AG04450 (cell line): ENCODE measurements at regions of chr2 and their contacts with region 1.

Region 1: GRCh38 chr2:163182764-163183354 is 344.3 kb upstream of the KCNH7 start:
- DNase-seq: no peak
- H3K4me3 ChIP-seq: no peak overlapping the region
- H3K27ac ChIP-seq: no peak overlapping the region
- H3K27me3 ChIP-seq: no peaks in the 10 kb centered on the region
- CTCF ChIP-seq: peak; percentile 63

Region 2: DNA sequence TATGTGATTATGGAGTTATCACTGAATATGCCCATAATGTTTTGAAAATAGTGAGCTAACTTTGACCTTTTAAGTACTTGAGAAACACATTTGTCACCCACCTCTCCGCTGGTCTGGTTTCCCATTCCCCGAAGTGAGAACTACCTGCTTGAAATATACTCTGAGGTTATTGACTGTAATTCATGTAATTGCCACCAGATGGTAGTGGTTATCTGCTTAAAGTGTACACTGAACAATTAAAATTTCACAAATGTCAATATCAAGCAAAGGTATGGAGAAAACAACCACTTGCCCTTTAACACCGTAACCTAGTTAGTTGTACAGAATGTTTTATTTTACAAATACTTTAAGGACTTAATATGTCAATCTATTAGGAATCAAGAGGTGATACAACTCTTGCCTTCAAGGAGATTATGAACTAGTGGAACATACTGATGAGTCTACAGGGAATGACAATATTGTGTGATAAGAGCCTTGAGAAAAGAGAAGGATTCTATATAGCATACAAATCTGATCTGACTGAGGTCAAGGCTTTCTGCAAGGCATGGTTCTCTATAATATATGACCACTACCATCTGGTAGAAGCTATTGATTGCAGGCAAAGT is 27.5 kb before region 1 on chr2:
- CTCF ChIA-PET with region 1: interaction called, 64 read pairs
- POLR2A ChIA-PET with region 1: no interaction called
- DNase-seq: no peak
- H3K4me3 ChIP-seq: no peak overlapping the region
- H3K27ac ChIP-seq: no peak overlapping the region
- H3K27me3 ChIP-seq: no peaks in the 10 kb centered on the region
- CTCF ChIP-seq: peak; percentile 69

Region 3: GRCh38 chr2:164479460-164479859 is 1296.6 kb after region 1 on chr2:
- CTCF ChIA-PET with region 1: interaction called, 10 read pairs
- POLR2A ChIA-PET with region 1: no interaction called
- DNase-seq: no peak
- H3K4me3 ChIP-seq: no peak overlapping the region
- H3K27ac ChIP-seq: no peak overlapping the region
- H3K27me3 ChIP-seq: no peaks in the 10 kb centered on the region
- CTCF ChIP-seq: peak; percentile 39